ENCODE measurements at regions of chr2 and their contacts with region 1.

Region 1: GRCh38 chr2:201451292-201452057 is at the starts of genes STRADB and TRAK2:
- DNase-seq: peak; percentile 89 to 98 (median 95)
- ATAC-seq: peak; percentile 89
- H3K4me3 ChIP-seq: peak within 1 kb of the TSS; percentile 64 to 79
- H3K4me3 Mint-ChIP-seq: peak within 1 kb of the TSS; percentile 96
- H3K27ac ChIP-seq: peak within 1 kb of the TSS; percentile 74 to 79
- H3K27ac Mint-ChIP-seq: peak within 1 kb of the TSS; percentile 95
- H3K4me1 ChIP-seq: peaks cover 41% of the 10 kb centered on the region
- H3K4me1 Mint-ChIP-seq: peaks cover 59% of the 10 kb centered on the region
- H3K27me3 ChIP-seq: no peaks in the 10 kb centered on the region
- H3K27me3 Mint-ChIP-seq: no peaks in the 10 kb centered on the region
- CTCF ChIP-seq: no peak
- total RNA-seq, gene STRADB: 4.5 to 5.8 TPM
- total RNA-seq, gene TRAK2: 20.1 to 22.5 TPM

Region 2: DNA sequence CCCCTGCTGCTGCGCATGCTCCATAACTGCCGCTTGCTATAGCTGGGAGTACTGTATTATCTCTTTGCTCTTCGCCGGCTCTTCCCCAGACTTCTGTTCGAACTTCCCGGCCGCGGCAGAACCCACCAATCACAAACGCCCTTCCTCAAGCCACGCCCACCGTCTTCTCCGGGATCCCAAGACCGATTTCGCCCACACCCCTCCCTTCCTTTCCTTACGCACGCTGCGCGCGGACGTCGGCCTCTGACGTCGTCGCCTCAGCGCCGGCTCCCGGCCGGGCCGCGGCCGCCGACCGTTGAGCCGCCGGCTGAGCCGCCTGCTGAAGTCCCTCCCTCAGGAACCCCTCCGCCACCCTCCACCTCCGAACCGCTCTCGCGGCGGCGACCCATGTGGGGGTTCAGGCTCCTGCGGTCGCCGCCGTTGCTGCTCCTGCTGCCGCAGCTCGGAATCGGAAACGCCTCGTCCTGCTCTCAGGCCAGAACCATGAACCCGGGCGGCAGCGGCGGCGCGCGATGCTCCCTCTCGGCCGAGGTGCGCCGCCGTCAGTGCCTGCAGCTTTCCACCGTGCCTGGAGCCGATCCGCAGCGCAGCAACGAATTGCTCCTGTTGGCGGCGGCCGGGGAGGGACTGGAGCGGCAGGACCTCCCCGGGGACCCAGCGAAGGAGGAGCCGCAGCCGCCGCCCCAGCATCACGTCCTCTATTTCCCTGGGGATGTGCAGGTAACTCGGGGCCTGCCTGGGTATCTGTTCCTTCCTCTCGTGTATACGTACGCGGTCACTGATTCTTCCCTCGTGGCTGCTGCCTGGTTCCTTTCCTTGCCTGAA is 1540.2 kb before region 1 on chr2 and contains the start of gene C2orf69:
- CTCF ChIA-PET with region 1: no interaction called
- POLR2A ChIA-PET with region 1: no interaction called
- intact Hi-C with region 1: loop called in 1 of 2 experiments (anchors 2 kb)
- DNase-seq: peak; percentile 80 to 96 (median 91)
- ATAC-seq: peak; percentile 78
- H3K4me3 ChIP-seq: peak within 1 kb of the TSS; percentile 82 to 83
- H3K4me3 Mint-ChIP-seq: peak within 1 kb of the TSS; percentile 99
- H3K27ac ChIP-seq: peak within 1 kb of the TSS; percentile 84 to 93
- H3K27ac Mint-ChIP-seq: peak within 1 kb of the TSS; percentile 95
- H3K4me1 ChIP-seq: peaks cover 28% of the 10 kb centered on the region
- H3K4me1 Mint-ChIP-seq: peaks cover 38% of the 10 kb centered on the region
- H3K27me3 ChIP-seq: no peaks in the 10 kb centered on the region
- H3K27me3 Mint-ChIP-seq: peaks cover 6% of the 10 kb centered on the region
- CTCF ChIP-seq: no peak
- total RNA-seq, gene C2orf69: 16.3 to 17.5 TPM

Region 3: GRCh38 chr2:200888704-200889625 is 562.5 kb before region 1 on chr2 and contains the starts of genes NIF3L1 and PPIL3:
- CTCF ChIA-PET with region 1: no interaction called
- POLR2A ChIA-PET with region 1: interaction called, 4 read pairs
- intact Hi-C with region 1: loop called (anchors 1 to 5 kb)
- DNase-seq: peak; percentile 92 to 99 (median 97)
- ATAC-seq: peak; percentile 70
- H3K4me3 ChIP-seq: peak within 1 kb of the TSS; percentile 77 to 78
- H3K4me3 Mint-ChIP-seq: peak within 1 kb of the TSS; percentile 94
- H3K27ac ChIP-seq: peak within 1 kb of the TSS; percentile 96
- H3K27ac Mint-ChIP-seq: peak within 1 kb of the TSS; percentile 100
- H3K4me1 ChIP-seq: peaks cover 21% of the 10 kb centered on the region
- H3K4me1 Mint-ChIP-seq: peaks cover 55% of the 10 kb centered on the region
- H3K27me3 ChIP-seq: no peaks in the 10 kb centered on the region
- H3K27me3 Mint-ChIP-seq: no peaks in the 10 kb centered on the region
- CTCF ChIP-seq: no peak
- total RNA-seq, gene NIF3L1: 3.8 to 4.9 TPM
- total RNA-seq, gene PPIL3: 48.6 to 51.0 TPM

Region 4: GRCh38 chr2:201257956-201258665 is 193.4 kb before region 1 on chr2:
- CTCF ChIA-PET with region 1: interaction called, 3 read pairs
- POLR2A ChIA-PET with region 1: interaction called, 6 read pairs
- intact Hi-C with region 1: loop called (anchors 1 to 5 kb)
- DNase-seq: peak; percentile 87 to 99 (median 94)
- ATAC-seq: peak; percentile 69
- H3K4me3 ChIP-seq: peak overlapping the region; percentile 45 to 48
- H3K4me3 Mint-ChIP-seq: peak overlapping the region; percentile 89
- H3K27ac ChIP-seq: peak overlapping the region; percentile 85 to 93
- H3K27ac Mint-ChIP-seq: peak overlapping the region; percentile 97
- H3K4me1 ChIP-seq: peaks cover 68% of the 10 kb centered on the region
- H3K4me1 Mint-ChIP-seq: peaks cover 75% of the 10 kb centered on the region
- H3K27me3 ChIP-seq: no peaks in the 10 kb centered on the region
- H3K27me3 Mint-ChIP-seq: no peaks in the 10 kb centered on the region
- CTCF ChIP-seq: no peak

Region 5: GRCh38 chr2:201270293-201271001 is 181.0 kb before region 1 on chr2:
- CTCF ChIA-PET with region 1: no interaction called
- POLR2A ChIA-PET with region 1: no interaction called
- intact Hi-C with region 1: no loop called
- DNase-seq: no peak
- ATAC-seq: no peak
- H3K4me3 ChIP-seq: no peak overlapping the region
- H3K4me3 Mint-ChIP-seq: no peak overlapping the region
- H3K27ac ChIP-seq: no peak overlapping the region
- H3K27ac Mint-ChIP-seq: peak overlapping the region; percentile 68
- H3K4me1 ChIP-seq: peaks cover 56% of the 10 kb centered on the region
- H3K4me1 Mint-ChIP-seq: peaks cover 73% of the 10 kb centered on the region
- H3K27me3 ChIP-seq: no peaks in the 10 kb centered on the region
- H3K27me3 Mint-ChIP-seq: no peaks in the 10 kb centered on the region
- CTCF ChIP-seq: no peak

Region 6: GRCh38 chr2:201780674-201781581 is 329.5 kb after region 1 on chr2 and contains the start of gene ALS2:
- CTCF ChIA-PET with region 1: no interaction called
- POLR2A ChIA-PET with region 1: interaction called, 10 read pairs
- intact Hi-C with region 1: loop called (anchors 1 to 5 kb)
- DNase-seq: peak; percentile 88 to 97 (median 94)
- ATAC-seq: peak; percentile 91
- H3K4me3 ChIP-seq: peak within 1 kb of the TSS; percentile 80 to 89
- H3K4me3 Mint-ChIP-seq: peak within 1 kb of the TSS; percentile 98
- H3K27ac ChIP-seq: peak within 1 kb of the TSS; percentile 94
- H3K27ac Mint-ChIP-seq: peak within 1 kb of the TSS; percentile 98
- H3K4me1 ChIP-seq: peaks cover 16% of the 10 kb centered on the region
- H3K4me1 Mint-ChIP-seq: peaks cover 27% of the 10 kb centered on the region
- H3K27me3 ChIP-seq: no peaks in the 10 kb centered on the region
- H3K27me3 Mint-ChIP-seq: peaks cover 3% of the 10 kb centered on the region
- CTCF ChIP-seq: no peak
- total RNA-seq, gene ALS2: 6.6 to 9.0 TPM

Region 7: DNA sequence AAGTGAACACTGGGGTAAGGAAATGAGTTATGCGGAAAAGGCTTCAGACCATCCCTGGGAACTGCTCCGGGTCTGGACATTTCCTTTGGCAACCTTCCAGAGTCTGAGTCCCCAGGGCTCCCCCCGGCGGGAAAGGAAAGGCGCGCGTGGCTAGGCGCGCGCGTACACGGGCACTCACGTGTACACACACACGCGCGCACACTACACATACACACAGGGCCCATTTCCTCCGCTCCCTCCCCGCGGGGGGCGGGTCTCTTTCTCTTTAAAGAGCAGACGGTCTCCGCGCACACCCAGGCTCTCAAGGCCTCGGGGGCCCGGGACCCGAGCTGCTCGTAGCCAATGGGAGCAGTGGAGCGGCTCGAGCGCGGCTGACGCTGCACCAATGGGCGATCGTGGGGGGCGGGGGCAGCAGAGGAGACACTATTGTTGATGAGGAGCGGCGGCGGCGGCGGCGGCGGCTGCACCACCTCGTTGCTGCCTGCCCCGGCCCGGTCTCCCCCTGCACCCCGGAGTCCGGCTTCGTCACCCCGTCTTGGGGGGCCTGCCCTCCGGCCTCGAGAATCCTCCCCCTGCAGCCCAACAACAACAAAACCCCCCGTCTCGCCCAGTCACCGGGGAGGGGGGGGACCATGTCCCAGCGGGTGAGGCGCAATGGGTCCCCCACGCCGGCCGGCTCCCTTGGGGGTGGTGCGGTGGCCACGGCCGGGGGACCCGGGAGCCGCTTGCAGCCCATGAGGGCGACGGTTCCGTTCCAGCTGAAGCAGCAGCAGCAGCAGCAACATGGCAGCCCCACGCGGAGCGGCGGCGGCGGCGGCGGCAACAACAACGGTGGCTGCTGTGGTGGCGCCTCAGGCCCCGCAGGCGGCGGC is 1183.3 kb after region 1 on chr2 and contains the start of gene FAM117B:
- CTCF ChIA-PET with region 1: no interaction called
- POLR2A ChIA-PET with region 1: no interaction called
- intact Hi-C with region 1: loop called in 1 of 2 experiments (anchors 10 kb)
- DNase-seq: peak; percentile 97 to 99 (median 98)
- ATAC-seq: peak; percentile 87
- H3K4me3 ChIP-seq: peak within 1 kb of the TSS; percentile 77 to 87
- H3K4me3 Mint-ChIP-seq: peak within 1 kb of the TSS; percentile 98
- H3K27ac ChIP-seq: peak within 1 kb of the TSS; percentile 76 to 89
- H3K27ac Mint-ChIP-seq: peak within 1 kb of the TSS; percentile 99
- H3K4me1 ChIP-seq: peaks cover 29% of the 10 kb centered on the region
- H3K4me1 Mint-ChIP-seq: peaks cover 52% of the 10 kb centered on the region
- H3K27me3 ChIP-seq: no peaks in the 10 kb centered on the region
- H3K27me3 Mint-ChIP-seq: no peaks in the 10 kb centered on the region
- CTCF ChIP-seq: no peak
- total RNA-seq, gene FAM117B: 40.0 to 45.8 TPM